PC-9 (cell line): ENCODE measurements at regions of chr11 and their contacts with region 1.

Region 1: GRCh38 chr11:70885821-70886231 is 366.6 kb downstream of the SHANK2 start:
- DNase-seq: no peak
- H3K4me3 ChIP-seq: no peak overlapping the region
- H3K27ac ChIP-seq: no peak overlapping the region
- H3K4me1 ChIP-seq: no peaks in the 10 kb centered on the region
- H3K27me3 ChIP-seq: no peaks in the 10 kb centered on the region
- CTCF ChIP-seq: no peak

Region 2: DNA sequence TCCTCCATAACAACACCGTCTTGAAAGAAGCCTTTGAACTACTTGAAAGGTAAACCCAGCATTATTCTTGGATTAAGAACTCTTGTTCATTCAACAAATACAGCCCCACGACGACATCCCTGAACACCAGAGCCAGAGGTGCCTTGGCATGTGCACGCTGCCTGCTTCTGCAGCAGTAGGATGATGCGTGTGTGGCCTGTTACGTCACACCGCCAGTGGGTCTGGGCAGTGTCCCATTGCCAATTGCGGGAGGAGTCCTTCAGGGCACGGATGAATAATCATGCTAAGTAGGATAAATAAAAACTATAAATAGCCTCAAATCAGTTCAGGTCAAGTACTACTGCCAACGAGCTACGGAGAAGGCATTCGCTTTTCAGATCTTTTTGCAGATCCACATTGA is 13.9 kb before region 1 on chr11:
- CTCF ChIA-PET with region 1: no interaction called
- POLR2A ChIA-PET with region 1: interaction called, 16 read pairs
- intact Hi-C with region 1: no loop called
- DNase-seq: no peak
- H3K4me3 ChIP-seq: no peak overlapping the region
- H3K27ac ChIP-seq: no peak overlapping the region
- H3K4me1 ChIP-seq: no peaks in the 10 kb centered on the region
- H3K27me3 ChIP-seq: no peaks in the 10 kb centered on the region
- CTCF ChIP-seq: no peak

Region 3: DNA sequence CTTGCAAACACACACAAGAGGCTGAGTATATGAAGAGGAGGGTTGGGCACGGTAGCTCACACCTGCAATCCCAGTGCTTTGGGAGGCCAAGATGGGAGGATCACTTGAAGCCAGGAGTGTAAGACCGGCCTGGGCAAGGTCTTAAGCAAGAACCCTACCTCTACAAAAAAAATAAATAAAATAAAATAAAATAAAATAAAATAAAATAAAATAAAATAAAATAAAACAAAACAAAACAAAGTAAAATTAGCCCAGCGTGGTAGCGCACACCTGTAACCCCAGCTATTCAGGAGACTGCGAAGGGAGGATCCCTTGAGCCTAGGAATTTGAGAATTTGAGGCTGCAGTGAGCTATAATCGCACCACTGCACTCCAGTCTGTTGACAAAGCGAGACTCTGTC is 28.7 kb after region 1 on chr11:
- CTCF ChIA-PET with region 1: interaction called, 16 read pairs
- POLR2A ChIA-PET with region 1: no interaction called
- intact Hi-C with region 1: no loop called
- DNase-seq: no peak
- H3K4me3 ChIP-seq: no peak overlapping the region
- H3K27ac ChIP-seq: no peak overlapping the region
- H3K4me1 ChIP-seq: no peaks in the 10 kb centered on the region
- H3K27me3 ChIP-seq: no peaks in the 10 kb centered on the region
- CTCF ChIP-seq: no peak

Region 4: GRCh38 chr11:70948855-70949569 is 63.2 kb after region 1 on chr11:
- CTCF ChIA-PET with region 1: no interaction called
- POLR2A ChIA-PET with region 1: no interaction called
- intact Hi-C with region 1: no loop called
- DNase-seq: no peak
- H3K4me3 ChIP-seq: no peak overlapping the region
- H3K27ac ChIP-seq: no peak overlapping the region
- H3K4me1 ChIP-seq: no peaks in the 10 kb centered on the region
- H3K27me3 ChIP-seq: no peaks in the 10 kb centered on the region
- CTCF ChIP-seq: no peak